ENCODE measurements at regions of chr11 and their contacts with region 1.

Region 1: GRCh38 chr11:120511116-120511819 is at the start of gene GRIK4:
- DNase-seq: peak; percentile 81
- H3K4me3 ChIP-seq: no peak within 1 kb of the TSS
- H3K27ac ChIP-seq: no peak within 1 kb of the TSS
- H3K4me1 ChIP-seq: no peaks in the 10 kb centered on the region
- CTCF ChIP-seq: peak; percentile 88
- total RNA-seq, gene GRIK4: 0.05 and 0.06 TPM in 2 replicates

Region 2: GRCh38 chr11:120306519-120307242 is 204.6 kb before region 1 on chr11:
- CTCF ChIA-PET with region 1: no interaction called
- POLR2A ChIA-PET with region 1: no interaction called
- intact Hi-C with region 1: no loop called
- DNase-seq: no peak
- H3K4me3 ChIP-seq: no peak overlapping the region
- H3K27ac ChIP-seq: no peak overlapping the region
- H3K4me1 ChIP-seq: no peaks in the 10 kb centered on the region
- CTCF ChIP-seq: peak; percentile 39

Region 3: DNA sequence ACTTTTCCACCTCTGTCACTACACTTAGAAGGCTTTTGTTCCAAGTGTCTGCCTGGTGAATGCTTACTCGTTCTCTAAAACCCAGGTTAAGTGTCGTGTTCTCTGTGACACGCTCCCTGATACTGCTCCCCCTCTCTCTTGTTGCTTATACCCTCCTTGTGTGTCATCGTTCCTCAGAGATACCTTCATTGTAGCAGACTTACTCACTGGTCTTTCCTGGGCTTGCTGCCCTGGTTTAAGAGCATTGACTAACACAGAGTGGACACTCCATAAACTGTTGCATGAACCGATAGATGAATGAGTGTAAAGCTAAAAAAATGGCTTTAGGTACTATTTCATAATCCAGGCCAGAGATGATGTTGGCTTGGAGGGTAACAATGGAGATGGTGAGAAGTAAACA is 171.6 kb after region 1 on chr11:
- CTCF ChIA-PET with region 1: no interaction called
- POLR2A ChIA-PET with region 1: no interaction called
- intact Hi-C with region 1: loop called (anchors 1 kb)
- DNase-seq: no peak
- H3K4me3 ChIP-seq: no peak overlapping the region
- H3K27ac ChIP-seq: no peak overlapping the region
- H3K4me1 ChIP-seq: peaks cover 3% of the 10 kb centered on the region
- CTCF ChIP-seq: no peak

Region 4: GRCh38 chr11:120801801-120802689 is 290.8 kb after region 1 on chr11:
- CTCF ChIA-PET with region 1: no interaction called
- POLR2A ChIA-PET with region 1: no interaction called
- intact Hi-C with region 1: loop called (anchors 2 kb)
- DNase-seq: peak; percentile 72
- H3K4me3 ChIP-seq: no peak overlapping the region
- H3K27ac ChIP-seq: no peak overlapping the region
- H3K4me1 ChIP-seq: peaks cover 7% of the 10 kb centered on the region
- CTCF ChIP-seq: peak; percentile 95

Region 5: DNA sequence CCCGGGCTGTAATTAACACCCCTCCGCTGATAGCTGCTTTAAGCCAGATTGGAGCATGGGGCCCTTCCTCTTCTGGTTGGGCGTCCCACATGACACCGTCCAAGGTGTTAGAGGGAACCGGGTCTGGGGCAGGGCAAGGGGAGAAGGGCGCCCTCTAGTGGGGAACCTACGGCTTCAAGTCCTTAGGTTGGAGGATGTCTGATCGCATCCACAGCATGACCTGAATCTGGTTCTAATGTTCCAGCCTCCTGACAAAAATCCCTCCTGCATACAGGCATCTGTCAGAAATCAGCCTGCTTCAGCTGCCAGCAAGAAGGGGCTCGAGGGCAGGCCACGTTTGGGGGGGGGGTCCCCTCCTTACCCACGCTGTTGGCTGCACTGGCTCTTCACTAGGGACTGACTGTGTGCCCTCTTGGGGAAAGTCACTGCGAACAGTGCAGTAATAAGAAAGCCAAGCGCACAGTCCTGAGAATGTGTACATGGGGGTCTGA is 418.4 kb after region 1 on chr11:
- CTCF ChIA-PET with region 1: no interaction called
- POLR2A ChIA-PET with region 1: no interaction called
- intact Hi-C with region 1: loop called (anchors 1 kb)
- DNase-seq: peak; percentile 73
- H3K4me3 ChIP-seq: no peak overlapping the region
- H3K27ac ChIP-seq: no peak overlapping the region
- H3K4me1 ChIP-seq: peaks cover 44% of the 10 kb centered on the region
- CTCF ChIP-seq: peak; percentile 89

Region 6: GRCh38 chr11:120952461-120953434 is 441.5 kb after region 1 on chr11:
- CTCF ChIA-PET with region 1: no interaction called
- POLR2A ChIA-PET with region 1: no interaction called
- intact Hi-C with region 1: loop called (anchors 1 kb)
- DNase-seq: peak; percentile 76
- H3K4me3 ChIP-seq: peak overlapping the region; percentile 43
- H3K27ac ChIP-seq: no peak overlapping the region
- H3K4me1 ChIP-seq: peaks cover 14% of the 10 kb centered on the region
- CTCF ChIP-seq: peak; percentile 90

Region 7: DNA sequence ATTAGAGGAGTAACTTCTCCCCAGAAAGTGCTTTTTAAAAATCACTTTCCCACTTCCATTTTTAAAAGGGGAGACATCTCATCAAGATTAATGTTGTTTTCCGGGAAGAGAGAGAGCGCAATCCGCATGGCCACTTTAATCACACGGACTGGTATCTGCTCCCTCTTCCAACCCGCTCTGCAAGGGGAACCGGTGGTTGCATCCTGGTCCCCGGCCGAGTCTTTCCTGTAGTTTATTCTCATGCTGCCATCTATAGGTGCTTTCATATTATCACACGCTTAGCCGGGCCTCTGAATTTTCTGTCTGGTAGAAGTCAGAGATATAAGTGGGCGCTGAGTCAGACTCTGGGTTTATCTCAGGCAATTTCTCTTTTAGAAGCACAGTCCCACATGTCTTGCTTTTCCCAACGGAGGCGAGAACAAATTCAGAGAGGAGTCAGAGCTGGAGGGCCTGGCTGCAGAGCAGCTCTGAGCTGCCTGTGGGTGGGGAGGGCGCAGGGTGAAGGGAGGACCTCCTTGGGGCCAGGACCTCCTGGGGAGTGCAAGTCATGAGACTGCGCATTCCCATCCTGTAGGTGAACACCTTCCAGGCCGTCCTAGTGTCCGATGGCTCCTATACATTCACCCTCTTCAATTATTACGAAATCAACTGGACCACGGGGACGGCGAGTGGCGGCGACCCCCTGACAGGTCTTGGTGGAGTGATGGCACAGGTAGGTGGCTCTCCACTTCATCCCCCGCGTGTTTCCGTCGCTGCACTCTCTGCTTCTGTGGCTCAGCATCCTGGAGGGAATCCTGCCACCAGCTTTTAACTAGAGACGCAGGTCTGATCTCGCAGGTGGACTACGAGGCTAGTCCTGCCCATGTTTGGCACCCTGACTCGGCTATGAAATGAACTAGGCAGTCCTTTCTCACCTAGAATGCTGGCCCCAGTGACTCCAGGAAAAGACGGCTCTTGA is 601.5 kb after region 1 on chr11:
- CTCF ChIA-PET with region 1: no interaction called
- POLR2A ChIA-PET with region 1: no interaction called
- intact Hi-C with region 1: loop called (anchors 5 kb)
- DNase-seq: peak; percentile 41
- H3K4me3 ChIP-seq: no peak overlapping the region
- H3K27ac ChIP-seq: no peak overlapping the region
- H3K4me1 ChIP-seq: no peaks in the 10 kb centered on the region
- CTCF ChIP-seq: peak; percentile 77

Region 8: DNA sequence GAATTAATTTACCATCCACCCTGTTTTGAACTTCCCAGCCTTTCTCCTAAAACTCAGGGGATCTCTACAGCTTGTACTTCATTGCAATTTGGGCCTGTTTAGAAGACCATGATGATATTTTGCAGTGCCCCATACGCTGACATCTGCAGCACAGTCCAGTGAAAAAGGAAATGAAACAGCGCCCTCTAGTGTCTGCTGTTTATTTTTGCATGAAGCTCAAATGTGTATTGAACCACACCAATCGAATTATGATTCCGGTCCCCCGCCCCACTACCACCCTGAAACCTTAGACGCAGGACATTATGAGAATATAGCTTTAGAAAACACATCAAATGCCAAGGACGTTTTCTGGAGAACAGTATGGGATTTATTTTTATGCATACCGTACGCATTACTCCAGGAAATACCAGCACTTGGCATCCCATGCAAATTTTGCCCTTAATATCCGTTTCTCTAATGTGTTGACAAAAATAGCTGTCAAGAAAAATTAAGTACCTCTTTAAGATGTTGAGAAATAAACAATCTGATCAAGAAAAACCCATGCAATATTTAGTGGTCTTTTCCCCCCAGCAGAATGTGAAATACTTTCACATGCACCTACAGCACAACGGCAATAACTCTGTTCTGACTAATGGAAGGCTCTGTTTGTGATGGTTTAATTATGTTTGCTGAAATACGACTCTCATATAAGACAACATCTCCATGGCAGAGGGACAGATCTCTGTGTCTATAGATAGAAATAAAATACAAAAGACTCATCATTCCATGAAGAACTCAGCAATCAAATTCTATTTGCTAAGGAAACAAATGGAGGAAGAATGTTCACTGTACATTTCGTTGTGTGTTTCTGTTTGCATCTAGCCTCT is 683.7 kb after region 1 on chr11:
- CTCF ChIA-PET with region 1: no interaction called
- POLR2A ChIA-PET with region 1: no interaction called
- intact Hi-C with region 1: loop called (anchors 5 kb)
- DNase-seq: peak; percentile 74
- H3K4me3 ChIP-seq: no peak overlapping the region
- H3K27ac ChIP-seq: no peak overlapping the region
- H3K4me1 ChIP-seq: peaks cover 5% of the 10 kb centered on the region
- CTCF ChIP-seq: peak; percentile 98

Measured in OCI-LY7 (cell line).